Posterior cingulate gyrus (tissue), 11 donors: ENCODE measurements at regions of chr13 and their contacts with region 1.

Region 1: GRCh38 chr13:77329133-77329910 is 2.4 kb upstream of the MYCBP2 start:
- DNase-seq: peak; percentile 78 to 97 (median 84)

Region 2: GRCh38 chr13:77026818-77027585 is 302.3 kb before region 1 on chr13 and contains the start of gene FBXL3:
- intact Hi-C with region 1: loop called (anchors 5 kb)
- DNase-seq: peak; percentile 71 to 98 (median 84)

Region 3: GRCh38 chr13:77397636-77398035 is 68.3 kb after region 1 on chr13:
- intact Hi-C with region 1: no loop called
- DNase-seq: no peak

Region 4: DNA sequence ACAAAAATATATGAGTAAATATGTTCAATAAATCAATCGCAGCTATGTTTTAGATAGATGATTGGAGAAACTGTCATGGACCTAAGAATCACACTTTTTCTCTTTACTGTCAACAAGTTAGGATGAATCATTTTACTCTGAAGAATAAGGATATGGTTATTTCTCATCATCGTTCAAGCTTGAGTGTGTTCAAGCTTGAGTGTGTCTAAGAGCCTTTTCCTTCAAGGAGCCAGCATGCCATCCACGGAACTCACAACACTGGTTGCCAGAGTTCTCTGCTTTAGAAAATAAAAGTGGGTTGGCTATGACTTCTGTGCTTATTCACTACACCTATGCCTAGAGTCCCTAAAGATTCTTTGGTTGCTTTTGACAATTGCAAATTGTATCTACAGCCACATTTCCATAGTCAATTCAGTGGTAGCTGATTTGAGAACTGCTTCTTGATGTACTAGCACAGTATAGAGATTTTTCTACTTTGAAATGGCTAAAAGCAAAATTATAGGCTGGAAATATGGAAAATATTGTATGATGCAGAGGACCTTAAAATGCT is 148.1 kb after region 1 on chr13:
- intact Hi-C with region 1: loop called (anchors 5 kb)
- DNase-seq: no peak

Region 5: GRCh38 chr13:77697217-77698103 is 368.1 kb after region 1 on chr13 and contains the start of gene SLAIN1:
- intact Hi-C with region 1: loop called (anchors 5 kb)
- DNase-seq: peak; percentile 83 to 98 (median 90)

Region 6: DNA sequence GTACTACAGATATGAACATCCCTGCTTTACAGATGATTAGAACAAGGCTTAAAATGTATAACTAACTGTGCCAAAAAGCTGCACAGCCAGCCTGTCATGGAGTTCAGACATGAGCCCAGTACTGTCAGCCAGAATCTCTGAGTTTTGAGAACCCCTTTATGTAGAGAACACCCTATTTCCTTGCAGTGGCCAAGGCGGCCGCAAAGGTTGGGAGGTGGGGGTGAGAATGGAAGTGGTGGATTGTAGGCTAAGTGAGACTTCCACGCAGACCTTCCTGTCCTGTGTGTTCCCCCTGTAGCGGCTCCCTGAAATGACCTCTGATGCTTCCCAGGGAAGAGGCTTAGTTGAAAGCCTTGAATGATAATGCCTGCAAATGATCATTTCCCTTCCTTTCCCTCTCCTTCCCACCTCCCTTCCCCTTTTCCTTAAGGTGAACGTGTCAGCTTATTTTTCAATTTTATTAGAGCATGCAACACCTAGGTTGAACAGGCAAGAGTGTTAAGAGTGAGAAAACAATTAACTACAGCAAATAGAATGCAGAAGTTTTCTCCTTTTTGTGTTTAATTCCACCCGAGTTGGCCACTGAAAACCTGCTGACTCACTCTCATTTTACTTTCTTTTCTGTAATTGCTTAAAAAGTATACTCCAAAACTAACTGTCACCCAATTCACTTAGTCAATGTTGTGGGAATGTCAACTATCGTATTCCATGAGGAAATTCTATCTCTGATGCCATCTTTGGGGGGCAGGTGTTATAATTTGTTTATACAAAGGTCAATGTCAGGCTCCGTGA is 756.3 kb after region 1 on chr13:
- intact Hi-C with region 1: no loop called
- DNase-seq: no peak